Left cardiac atrium (tissue), 4 donors: ENCODE measurements at regions of chr14 and their contacts with region 1.

Region 1: GRCh38 chr14:59189786-59190771 is 1.6 kb downstream of the DAAM1 start:
- DNase-seq: peak; percentile 89
- ATAC-seq: peak; percentile 12 to 50

Region 2: GRCh38 chr14:58513272-58513671 is 676.8 kb before region 1 on chr14:
- intact Hi-C with region 1: no loop called
- DNase-seq: no peak
- ATAC-seq: no peak

Region 3: GRCh38 chr14:59132796-59133494 is 57.1 kb before region 1 on chr14:
- intact Hi-C with region 1: loop called in 1 of 2 experiments (anchors 5 kb)
- DNase-seq: no peak
- ATAC-seq: peak in 1 of 2 donors; percentile 50

Region 4: DNA sequence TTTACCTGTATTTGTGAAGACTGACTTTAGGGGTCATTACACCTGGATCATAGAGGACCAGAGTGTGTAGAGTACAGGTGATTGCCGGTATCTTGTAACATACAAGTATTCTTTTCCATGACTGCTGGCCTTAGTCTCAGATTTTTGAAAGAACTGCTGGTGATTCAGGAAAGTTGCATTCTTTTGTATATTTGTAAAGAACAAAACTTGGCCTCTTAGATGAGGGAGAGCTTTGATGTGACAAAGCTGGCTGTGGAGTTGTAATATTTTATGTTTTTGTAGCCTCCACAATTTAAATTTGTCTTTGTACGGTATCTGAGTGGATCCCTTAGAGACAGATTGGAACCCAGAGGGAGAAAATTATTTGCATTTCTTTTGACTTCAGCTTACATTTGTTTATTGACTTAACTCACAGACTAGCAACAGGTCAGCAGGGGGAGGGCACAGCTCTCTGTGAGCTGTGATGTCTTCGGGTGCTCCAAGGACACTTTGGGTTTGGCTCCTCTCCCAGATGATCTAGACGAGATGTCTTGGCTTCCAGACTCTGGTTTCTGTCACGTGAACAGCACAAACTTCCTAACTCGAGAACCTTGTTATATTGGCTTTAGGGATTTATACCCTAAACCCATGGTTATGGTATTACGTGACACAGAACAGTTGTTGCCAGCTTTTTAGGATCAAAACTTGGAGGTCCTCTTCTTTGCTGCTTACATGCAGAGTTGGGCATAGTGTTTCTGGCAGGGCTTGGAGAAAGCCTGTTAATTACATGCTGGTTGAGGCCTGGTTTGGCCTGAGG is 64.3 kb after region 1 on chr14:
- intact Hi-C with region 1: loop called in 1 of 2 experiments (anchors 10 kb)
- DNase-seq: peak; percentile 72
- ATAC-seq: peak; percentile 86 to 88

Region 5: DNA sequence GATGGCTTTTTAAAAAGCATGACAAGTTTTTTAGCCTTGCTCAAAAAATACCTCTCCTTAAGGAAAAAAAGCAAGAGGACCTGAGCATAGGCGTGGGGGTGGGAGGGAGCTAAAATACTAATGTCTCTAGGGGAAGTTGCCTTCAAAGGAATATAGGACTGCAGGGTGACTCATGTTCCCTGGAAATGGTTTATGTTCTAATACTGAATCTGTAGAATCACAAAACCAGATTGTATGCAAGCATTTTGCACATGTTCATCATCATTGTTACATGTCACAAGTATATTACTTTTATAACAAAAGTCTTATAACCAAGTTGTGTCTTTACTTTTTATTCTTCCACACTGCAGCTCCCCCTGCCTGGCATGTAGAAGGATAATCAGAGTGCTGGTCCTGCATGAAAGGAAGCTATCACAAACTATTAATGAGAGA is 238.5 kb after region 1 on chr14:
- intact Hi-C with region 1: loop called in 1 of 2 experiments (anchors 5 kb)
- DNase-seq: no peak
- ATAC-seq: peak in 1 of 2 donors; percentile 21

Region 6: DNA sequence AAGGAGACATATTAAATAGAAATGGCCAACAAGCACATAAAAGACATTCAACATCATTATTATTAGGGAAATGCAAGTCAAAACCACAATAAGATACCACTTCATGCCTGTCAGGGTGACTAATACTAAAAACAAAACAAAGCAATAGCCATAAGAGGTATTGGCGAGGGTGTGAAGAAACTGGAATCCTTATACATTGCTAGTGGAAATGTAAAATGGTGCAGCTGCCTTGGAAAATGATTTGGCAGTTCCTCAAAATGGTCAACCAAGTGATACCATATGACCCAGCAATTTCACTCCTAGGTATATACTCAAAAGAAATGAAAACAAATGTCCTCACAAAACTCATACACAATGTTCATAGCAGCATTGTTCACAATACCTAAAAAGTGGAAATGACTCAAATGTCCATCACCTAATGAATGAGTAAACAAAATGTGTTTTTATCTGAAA is 248.1 kb after region 1 on chr14:
- intact Hi-C with region 1: loop called in 1 of 2 experiments (anchors 5 kb)
- DNase-seq: no peak
- ATAC-seq: peak in 1 of 2 donors; percentile 46

Region 7: GRCh38 chr14:60091550-60092530 is 901.8 kb after region 1 on chr14 and contains the start of gene PCNX4:
- intact Hi-C with region 1: loop called in 1 of 2 experiments (anchors 10 kb)
- DNase-seq: peak; percentile 97
- ATAC-seq: peak; percentile 97 to 99
- total RNA-seq, gene PCNX4: 30.4 to 37.8 TPM